Activated naive CD4-positive, alpha-beta T cell treated with anti-CD3 and anti-CD28 coated beads for 36 hours (primary cell): ENCODE measurements at regions of chr16 and their contacts with region 1.

Region 1: DNA sequence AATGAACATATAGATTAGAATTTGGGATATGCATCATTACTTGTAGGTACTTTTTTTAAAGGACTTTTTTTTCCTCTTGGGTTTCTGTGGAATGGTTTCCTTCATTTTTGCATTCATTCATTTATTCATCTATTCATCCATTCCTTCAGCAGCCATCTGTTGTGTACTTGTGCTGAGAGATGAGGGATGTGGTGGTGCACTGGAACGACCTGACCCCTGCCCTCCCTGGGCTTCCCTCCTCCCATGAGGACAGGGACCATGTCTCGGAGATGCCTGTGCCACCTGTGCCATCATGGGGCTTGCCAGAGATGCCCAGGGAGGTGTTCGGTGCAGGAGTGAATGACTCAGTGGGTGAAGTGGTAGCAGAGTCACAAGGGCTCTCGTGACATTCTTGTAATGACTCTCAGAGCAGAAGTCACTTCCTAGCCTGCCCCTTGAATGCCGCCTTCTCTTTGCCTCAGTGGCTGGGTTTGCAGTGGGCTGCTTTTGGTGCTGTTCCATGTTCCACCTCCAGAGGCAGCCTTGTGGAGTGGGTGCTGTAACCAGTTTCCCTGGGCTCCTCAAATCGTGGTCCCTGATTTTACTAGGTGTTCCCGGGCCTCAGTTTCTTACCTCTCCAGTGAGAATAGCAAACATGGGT is 43.9 kb downstream of the CLEC16A start:
- DNase-seq: peak; percentile 95
- H3K4me3 Mint-ChIP-seq: peak overlapping the region; percentile 22
- H3K27ac Mint-ChIP-seq: peak overlapping the region; percentile 87
- H3K4me1 Mint-ChIP-seq: peaks cover 79% of the 10 kb centered on the region
- H3K27me3 Mint-ChIP-seq: no peaks in the 10 kb centered on the region

Region 2: GRCh38 chr16:10957771-10958486 is 30.4 kb before region 1 on chr16:
- CTCF ChIA-PET with region 1: interaction called, 31 read pairs
- intact Hi-C with region 1: loop called (anchors 1 kb)
- DNase-seq: peak; percentile 57
- H3K4me3 Mint-ChIP-seq: no peak overlapping the region
- H3K27ac Mint-ChIP-seq: peak overlapping the region; percentile 82
- H3K4me1 Mint-ChIP-seq: peaks cover 37% of the 10 kb centered on the region
- H3K27me3 Mint-ChIP-seq: no peaks in the 10 kb centered on the region

Region 3: GRCh38 chr16:11051879-11052808 is 63.9 kb after region 1 on chr16:
- CTCF ChIA-PET with region 1: interaction called, 3 read pairs
- intact Hi-C with region 1: loop called (anchors 1 kb)
- DNase-seq: peak; percentile 71
- H3K4me3 Mint-ChIP-seq: no peak overlapping the region
- H3K27ac Mint-ChIP-seq: peak overlapping the region; percentile 54
- H3K4me1 Mint-ChIP-seq: peaks cover 31% of the 10 kb centered on the region
- H3K27me3 Mint-ChIP-seq: no peaks in the 10 kb centered on the region

Region 4: DNA sequence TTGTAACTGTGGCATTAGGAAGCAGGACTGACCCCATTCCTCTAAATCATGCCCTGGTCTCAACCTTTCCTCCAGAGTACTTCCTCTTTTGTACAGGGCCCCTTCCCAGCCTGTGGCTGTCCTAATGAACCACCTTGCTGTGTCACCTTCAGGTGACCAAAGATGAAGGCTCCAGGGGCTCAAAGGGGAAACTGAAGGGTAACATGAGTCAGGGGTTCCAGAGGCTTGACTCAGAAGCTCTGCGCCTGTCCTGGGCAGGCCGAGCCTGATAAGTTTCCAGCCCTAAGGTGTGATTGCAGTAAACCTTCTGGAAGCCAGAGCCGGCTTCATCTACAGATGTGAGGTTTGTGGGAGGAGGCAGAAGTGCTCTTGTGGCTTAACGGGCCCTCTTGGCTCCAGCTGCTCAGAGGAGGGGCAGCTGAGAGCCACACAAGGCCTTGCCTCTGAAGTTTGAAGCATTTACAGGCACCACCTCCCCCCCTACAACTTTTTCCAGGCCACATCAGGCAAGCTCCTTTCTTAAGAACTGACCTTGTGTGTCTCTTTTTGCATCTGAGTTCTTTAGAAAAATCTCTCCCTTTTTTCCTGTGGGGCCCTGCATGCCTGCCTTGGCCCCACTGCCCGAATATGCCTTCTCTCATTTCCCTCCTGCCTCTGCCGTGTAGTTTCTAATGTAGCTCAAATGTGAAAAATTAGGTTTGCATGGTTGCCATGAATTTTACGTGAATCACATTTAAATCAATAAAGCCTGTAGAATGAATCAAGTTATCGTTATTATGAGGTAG is 106.0 kb after region 1 on chr16:
- CTCF ChIA-PET with region 1: interaction called, 4 read pairs
- intact Hi-C with region 1: loop called (anchors 1 kb)
- DNase-seq: peak; percentile 88
- H3K4me3 Mint-ChIP-seq: peak overlapping the region; percentile 11
- H3K27ac Mint-ChIP-seq: peak overlapping the region; percentile 95
- H3K4me1 Mint-ChIP-seq: peaks cover 68% of the 10 kb centered on the region
- H3K27me3 Mint-ChIP-seq: no peaks in the 10 kb centered on the region

Region 5: GRCh38 chr16:11114366-11115164 is 126.3 kb after region 1 on chr16:
- CTCF ChIA-PET with region 1: interaction called, 3 read pairs
- intact Hi-C with region 1: loop called (anchors 1 kb)
- DNase-seq: peak; percentile 77
- H3K4me3 Mint-ChIP-seq: peak overlapping the region; percentile 23
- H3K27ac Mint-ChIP-seq: peak overlapping the region; percentile 83
- H3K4me1 Mint-ChIP-seq: peaks cover 33% of the 10 kb centered on the region
- H3K27me3 Mint-ChIP-seq: no peaks in the 10 kb centered on the region

Region 6: DNA sequence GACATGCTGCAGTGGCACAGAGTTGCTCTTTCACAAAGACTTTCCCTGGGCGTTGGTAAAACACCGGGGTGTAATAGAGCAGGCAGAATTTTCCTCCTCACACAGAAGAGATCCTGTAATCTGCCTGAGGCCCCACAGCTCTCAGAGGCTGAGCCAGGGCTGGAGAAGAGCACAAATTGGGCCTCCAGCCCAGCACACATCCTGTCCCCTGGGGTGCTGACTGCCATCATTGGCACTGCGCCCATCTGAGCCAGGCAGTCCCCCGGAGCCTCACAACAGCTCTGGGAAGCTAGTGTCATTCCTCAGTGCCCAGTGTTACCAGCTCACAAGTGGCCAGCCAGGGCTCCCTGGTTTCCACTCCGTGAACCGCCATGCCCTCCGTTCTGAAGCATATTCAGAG is 148.3 kb after region 1 on chr16:
- CTCF ChIA-PET with region 1: no interaction called
- intact Hi-C with region 1: no loop called
- DNase-seq: no peak
- H3K4me3 Mint-ChIP-seq: no peak overlapping the region
- H3K27ac Mint-ChIP-seq: no peak overlapping the region
- H3K4me1 Mint-ChIP-seq: peaks cover 53% of the 10 kb centered on the region
- H3K27me3 Mint-ChIP-seq: no peaks in the 10 kb centered on the region

Region 7: DNA sequence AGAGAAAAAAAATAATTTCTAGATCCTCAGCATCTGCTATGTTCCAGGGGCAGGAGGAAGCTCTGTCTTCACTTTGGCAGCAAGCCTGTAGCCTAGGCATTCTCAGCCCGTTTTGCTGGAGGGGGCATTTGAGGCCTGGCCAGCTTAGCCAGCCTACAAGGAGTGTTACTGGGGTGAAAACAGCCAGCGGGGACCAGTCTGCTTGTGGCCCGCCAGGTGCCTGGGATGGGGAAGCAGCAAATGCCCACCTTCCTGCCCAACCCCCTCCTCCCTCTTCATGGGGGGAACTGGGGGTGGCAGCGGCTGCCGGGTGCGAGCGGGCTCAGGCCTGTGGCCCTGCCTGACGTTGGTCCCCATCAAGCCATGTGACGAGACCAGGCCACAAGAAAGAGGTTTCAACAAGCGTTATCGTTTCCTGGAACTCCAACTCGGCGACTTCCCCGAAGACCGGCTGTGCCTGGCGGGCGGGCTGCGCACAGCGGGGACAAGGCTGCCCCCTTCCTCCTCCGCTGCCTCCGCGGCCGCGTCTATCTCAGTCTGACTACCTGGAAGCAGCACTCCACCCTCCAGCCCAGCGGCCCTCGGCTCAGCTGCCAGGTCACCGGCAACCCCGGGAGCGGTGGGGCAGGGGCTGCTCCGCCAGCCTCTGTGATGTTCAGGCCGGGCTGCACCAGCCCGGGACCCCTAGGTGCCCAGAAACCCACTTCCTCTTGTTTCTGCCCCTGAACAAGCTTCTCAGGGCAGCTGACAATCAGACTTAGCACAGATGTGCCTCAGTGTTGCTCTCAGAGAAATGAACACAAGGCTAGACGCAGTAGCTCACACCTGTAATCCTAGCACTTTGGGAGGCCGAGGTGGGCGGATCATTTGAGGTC is 244.8 kb after region 1 on chr16:
- CTCF ChIA-PET with region 1: no interaction called
- intact Hi-C with region 1: loop called (anchors 1 kb)
- DNase-seq: peak; percentile 97
- H3K4me3 Mint-ChIP-seq: peak overlapping the region; percentile 57
- H3K27ac Mint-ChIP-seq: peak overlapping the region; percentile 99
- H3K4me1 Mint-ChIP-seq: peaks cover 55% of the 10 kb centered on the region
- H3K27me3 Mint-ChIP-seq: no peaks in the 10 kb centered on the region

Region 8: GRCh38 chr16:11361701-11362451 is 373.6 kb after region 1 on chr16:
- CTCF ChIA-PET with region 1: no interaction called
- intact Hi-C with region 1: loop called (anchors 2 kb)
- DNase-seq: peak; percentile 76
- H3K4me3 Mint-ChIP-seq: peak overlapping the region; percentile 48
- H3K27ac Mint-ChIP-seq: peak overlapping the region; percentile 21
- H3K4me1 Mint-ChIP-seq: peaks cover 52% of the 10 kb centered on the region
- H3K27me3 Mint-ChIP-seq: no peaks in the 10 kb centered on the region